ENCODE measurements at regions of chr9 and their contacts with region 1.

Region 1: DNA sequence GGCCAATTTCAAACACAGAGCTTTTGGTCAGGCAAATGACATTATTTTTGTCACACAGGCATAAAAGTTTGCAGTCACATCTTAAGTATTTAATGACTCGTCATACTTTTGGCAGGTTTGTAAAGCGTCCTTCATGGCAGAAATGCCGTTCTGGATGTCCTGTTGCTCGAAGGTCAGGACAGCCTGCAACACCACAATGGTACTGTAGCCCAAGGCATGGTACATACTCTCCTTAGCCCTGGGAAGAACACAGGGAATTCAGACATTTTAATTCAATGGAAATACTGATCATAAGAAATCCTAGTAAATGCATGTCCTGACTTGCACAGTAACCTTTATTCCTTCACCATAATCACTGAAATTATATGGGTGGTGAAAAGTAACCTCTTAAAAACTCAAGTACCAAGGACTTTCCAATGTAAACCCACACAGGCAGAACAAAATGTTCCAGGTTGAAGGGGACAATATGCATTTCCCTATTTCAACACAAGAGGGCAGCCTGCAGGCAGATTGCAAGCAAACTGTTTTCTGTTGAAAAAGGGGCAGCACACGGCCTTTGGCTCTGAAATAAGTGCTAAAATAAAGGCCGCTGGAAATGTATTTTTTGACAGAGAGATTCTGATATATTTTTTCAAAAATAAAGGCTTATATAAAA is 95.7 kb downstream of the TTC39B start:
- DNase-seq: peak; percentile 34 to 74
- H3K4me3 ChIP-seq: no peak overlapping the region
- H3K27ac ChIP-seq: no peak overlapping the region
- H3K4me1 ChIP-seq: peaks cover 0 to 3% (median 0%) of the 10 kb centered on the region in 4 experiments; a peak in 1 of 7 replicates
- H3K27me3 ChIP-seq: no peaks in the 10 kb centered on the region
- CTCF ChIP-seq: peak; percentile 13 to 87 (median 83)
- EP300 ChIP-seq: no peak
- POLR2A ChIP-seq: no peak
- RAD21 ChIP-seq: peak; percentile 82 to 83

Region 2: DNA sequence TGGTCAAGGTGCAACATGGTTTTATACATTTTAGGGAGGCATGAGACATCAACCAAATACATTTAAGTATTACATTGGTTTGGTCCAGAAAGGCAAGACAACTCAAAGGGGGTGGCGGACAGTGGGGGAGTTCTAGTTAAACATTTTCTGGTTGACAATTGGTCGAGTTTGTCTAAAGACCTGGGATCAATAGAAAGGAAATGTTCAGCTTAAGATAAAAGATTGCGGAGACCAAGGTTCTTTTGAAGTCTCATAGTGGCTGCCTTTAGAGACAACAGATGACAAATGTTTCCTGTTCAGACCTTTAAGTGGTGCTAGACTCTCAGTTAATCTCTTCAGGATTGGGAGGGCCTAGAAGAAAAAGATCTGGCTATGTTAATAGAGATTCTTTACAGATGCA is 143.4 kb after region 1 on chr9:
- CTCF ChIA-PET with region 1: interaction called, 11 read pairs
- POLR2A ChIA-PET with region 1: no interaction called
- DNase-seq: no peak
- H3K4me3 ChIP-seq: no peak overlapping the region; a peak in 1 of 8 replicates
- H3K27ac ChIP-seq: no peak overlapping the region
- H3K4me1 ChIP-seq: peaks cover 0 to 6% (median 4%) of the 10 kb centered on the region in 4 experiments; a peak in 4 of 7 replicates
- H3K27me3 ChIP-seq: no peaks in the 10 kb centered on the region
- CTCF ChIP-seq: no peak
- EP300 ChIP-seq: no peak
- POLR2A ChIP-seq: no peak
- RAD21 ChIP-seq: peak in 1 of 2 experiments; percentile 29; a peak in 2 of 4 replicates

Region 3: GRCh38 chr9:15416880-15417279 is 205.6 kb after region 1 on chr9:
- CTCF ChIA-PET with region 1: interaction called, 30 read pairs
- POLR2A ChIA-PET with region 1: no interaction called
- DNase-seq: peak in 1 of 2 experiments; percentile 53
- H3K4me3 ChIP-seq: no peak overlapping the region
- H3K27ac ChIP-seq: no peak overlapping the region
- H3K4me1 ChIP-seq: peaks cover 0 to 2% (median 0%) of the 10 kb centered on the region in 4 experiments; a peak in 3 of 7 replicates
- H3K27me3 ChIP-seq: no peaks in the 10 kb centered on the region
- CTCF ChIP-seq: peak in 2 of 3 experiments; percentile 43 to 57; a peak in 3 of 4 replicates
- EP300 ChIP-seq: no peak
- POLR2A ChIP-seq: no peak
- RAD21 ChIP-seq: peak; percentile 82 to 85

Measured in H1 (cell line).